Activated naive CD4-positive, alpha-beta T cell treated with anti-CD3 and anti-CD28 coated beads for 36 hours (primary cell): ENCODE measurements at regions of chr2 and their contacts with region 1.

Region 1: DNA sequence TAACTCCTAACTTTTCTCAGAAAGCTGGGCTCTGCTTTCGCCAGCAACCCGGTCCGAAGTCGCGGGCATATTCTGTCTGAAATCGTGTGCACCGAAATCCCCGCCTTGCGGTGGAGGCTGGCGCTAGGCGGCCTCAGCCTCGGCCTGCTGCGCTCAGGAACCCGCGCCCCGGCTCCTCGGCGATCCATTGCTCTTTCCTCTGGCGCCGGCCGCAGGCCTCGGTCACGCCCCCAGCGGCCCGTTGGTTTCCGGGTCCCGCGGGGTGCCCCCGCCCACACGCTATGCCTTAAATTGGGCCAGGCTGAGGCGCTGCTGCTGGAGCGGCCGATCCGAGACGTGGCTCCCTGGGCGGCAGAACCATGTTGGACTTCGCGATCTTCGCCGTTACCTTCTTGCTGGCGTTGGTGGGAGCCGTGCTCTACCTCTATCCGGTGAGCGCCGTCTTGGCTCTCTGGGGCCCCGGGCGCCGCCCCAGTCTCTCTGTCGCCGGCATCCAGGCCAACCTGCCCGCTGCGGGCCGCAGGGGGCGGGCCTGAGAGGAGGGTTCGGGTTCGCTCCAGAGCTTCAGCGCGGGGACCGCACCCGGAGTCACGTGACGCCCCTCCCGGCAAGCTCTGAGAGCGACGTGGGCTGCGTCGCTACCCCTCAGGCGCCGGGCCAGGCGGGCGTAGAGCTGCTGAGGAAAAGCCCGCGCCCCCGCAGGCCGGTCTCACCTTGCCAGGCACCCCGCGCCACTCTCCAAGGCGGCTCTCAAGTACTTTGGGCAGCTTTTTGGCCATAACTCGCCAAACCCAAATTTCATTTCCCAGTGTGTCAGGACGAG is at the start of gene CYP20A1:
- DNase-seq: peak; percentile 97
- H3K4me3 Mint-ChIP-seq: peak within 1 kb of the TSS; percentile 94
- H3K27ac Mint-ChIP-seq: peak within 1 kb of the TSS; percentile 98
- H3K4me1 Mint-ChIP-seq: peaks cover 35% of the 10 kb centered on the region
- H3K27me3 Mint-ChIP-seq: no peaks in the 10 kb centered on the region
- total RNA-seq, gene CYP20A1: 12.0 to 12.2 TPM

Region 2: GRCh38 chr2:202577250-202578183 is 661.4 kb before region 1 on chr2:
- CTCF ChIA-PET with region 1: no interaction called
- intact Hi-C with region 1: loop called (anchors 10 kb)
- DNase-seq: no peak
- H3K4me3 Mint-ChIP-seq: no peak overlapping the region
- H3K27ac Mint-ChIP-seq: no peak overlapping the region
- H3K4me1 Mint-ChIP-seq: peaks cover 2% of the 10 kb centered on the region
- H3K27me3 Mint-ChIP-seq: no peaks in the 10 kb centered on the region

Region 3: GRCh38 chr2:202870431-202871299 is 368.2 kb before region 1 on chr2:
- CTCF ChIA-PET with region 1: no interaction called
- intact Hi-C with region 1: loop called (anchors 2 kb)
- DNase-seq: peak; percentile 85
- H3K4me3 Mint-ChIP-seq: peak overlapping the region; percentile 88
- H3K27ac Mint-ChIP-seq: peak overlapping the region; percentile 72
- H3K4me1 Mint-ChIP-seq: peaks cover 7% of the 10 kb centered on the region
- H3K27me3 Mint-ChIP-seq: no peaks in the 10 kb centered on the region

Region 4: DNA sequence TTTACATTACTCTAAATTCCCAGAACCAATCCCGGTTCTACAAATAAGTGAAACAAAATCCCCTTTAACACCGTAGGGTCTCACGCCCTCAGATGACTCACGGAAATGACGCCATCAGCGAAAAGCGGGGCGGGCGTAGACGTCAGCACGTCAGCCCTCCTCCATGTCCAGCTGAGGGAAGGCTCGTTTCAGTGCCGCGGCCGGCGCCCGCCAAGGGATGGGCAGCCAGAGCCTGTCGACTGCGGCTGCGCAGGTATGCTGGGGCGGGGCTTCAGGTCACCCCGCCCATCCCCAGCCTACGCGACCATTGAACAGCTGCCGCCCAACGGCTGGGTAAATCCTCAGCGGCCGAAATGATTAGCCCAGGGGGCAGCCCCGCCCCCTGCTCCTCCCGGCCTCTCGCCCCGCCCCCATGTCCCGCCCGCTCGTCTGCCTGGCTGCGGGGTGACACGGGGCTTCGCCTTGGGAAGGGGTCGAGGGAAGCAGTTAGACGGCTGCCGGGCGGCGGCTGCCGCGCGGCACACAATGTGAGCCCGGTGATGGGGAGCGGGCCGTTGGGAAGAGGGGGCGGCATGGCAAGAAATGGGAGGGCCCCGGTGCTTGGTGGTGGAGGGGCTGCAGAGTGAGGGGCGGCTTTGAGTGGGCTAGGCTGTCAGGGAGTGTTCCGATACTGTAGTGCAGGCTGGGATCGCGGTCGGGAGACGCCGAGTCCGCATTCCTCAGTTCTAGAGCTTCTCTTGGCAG is 224.3 kb before region 1 on chr2 and contains the start of gene NBEAL1:
- CTCF ChIA-PET with region 1: no interaction called
- intact Hi-C with region 1: loop called (anchors 1 kb)
- DNase-seq: peak; percentile 97
- H3K4me3 Mint-ChIP-seq: peak within 1 kb of the TSS; percentile 95
- H3K27ac Mint-ChIP-seq: peak within 1 kb of the TSS; percentile 74
- H3K4me1 Mint-ChIP-seq: peaks cover 27% of the 10 kb centered on the region
- H3K27me3 Mint-ChIP-seq: no peaks in the 10 kb centered on the region
- total RNA-seq, gene NBEAL1: 7.9 to 8.3 TPM

Region 5: GRCh38 chr2:203327901-203328759 is 89.2 kb after region 1 on chr2 and contains the start of gene ABI2:
- CTCF ChIA-PET with region 1: no interaction called
- intact Hi-C with region 1: loop called (anchors 1 kb)
- DNase-seq: peak; percentile 65
- H3K4me3 Mint-ChIP-seq: peak within 1 kb of the TSS; percentile 84
- H3K27ac Mint-ChIP-seq: peak within 1 kb of the TSS; percentile 73
- H3K4me1 Mint-ChIP-seq: peaks cover 27% of the 10 kb centered on the region
- H3K27me3 Mint-ChIP-seq: no peaks in the 10 kb centered on the region
- total RNA-seq, gene ABI2: 34.0 to 40.9 TPM

Region 6: GRCh38 chr2:203650860-203651613 is 412.1 kb after region 1 on chr2:
- CTCF ChIA-PET with region 1: no interaction called
- intact Hi-C with region 1: loop called (anchors 5 kb)
- DNase-seq: peak; percentile 26
- H3K4me3 Mint-ChIP-seq: no peak overlapping the region
- H3K27ac Mint-ChIP-seq: no peak overlapping the region
- H3K4me1 Mint-ChIP-seq: peaks cover 25% of the 10 kb centered on the region
- H3K27me3 Mint-ChIP-seq: no peaks in the 10 kb centered on the region